IMR-90 (cell line): ENCODE measurements at regions of chr2 and their contacts with region 1.

Region 1: GRCh38 chr2:128321784-128322714 is 3.4 kb upstream of the HS6ST1 start:
- DNase-seq: peak; percentile 75
- ATAC-seq: peak; percentile 64
- H3K4me3 ChIP-seq: peak overlapping the region; percentile 49
- H3K27ac ChIP-seq: peak overlapping the region; percentile 58
- H3K4me1 ChIP-seq: peaks cover 7% of the 10 kb centered on the region; the same call in 1 of the 2 replicates
- H3K27me3 ChIP-seq: no peaks in the 10 kb centered on the region
- CTCF ChIP-seq: peak; percentile 99
- POLR2A ChIP-seq: peak; percentile 63
- RAD21 ChIP-seq: peak; percentile 95

Region 2: DNA sequence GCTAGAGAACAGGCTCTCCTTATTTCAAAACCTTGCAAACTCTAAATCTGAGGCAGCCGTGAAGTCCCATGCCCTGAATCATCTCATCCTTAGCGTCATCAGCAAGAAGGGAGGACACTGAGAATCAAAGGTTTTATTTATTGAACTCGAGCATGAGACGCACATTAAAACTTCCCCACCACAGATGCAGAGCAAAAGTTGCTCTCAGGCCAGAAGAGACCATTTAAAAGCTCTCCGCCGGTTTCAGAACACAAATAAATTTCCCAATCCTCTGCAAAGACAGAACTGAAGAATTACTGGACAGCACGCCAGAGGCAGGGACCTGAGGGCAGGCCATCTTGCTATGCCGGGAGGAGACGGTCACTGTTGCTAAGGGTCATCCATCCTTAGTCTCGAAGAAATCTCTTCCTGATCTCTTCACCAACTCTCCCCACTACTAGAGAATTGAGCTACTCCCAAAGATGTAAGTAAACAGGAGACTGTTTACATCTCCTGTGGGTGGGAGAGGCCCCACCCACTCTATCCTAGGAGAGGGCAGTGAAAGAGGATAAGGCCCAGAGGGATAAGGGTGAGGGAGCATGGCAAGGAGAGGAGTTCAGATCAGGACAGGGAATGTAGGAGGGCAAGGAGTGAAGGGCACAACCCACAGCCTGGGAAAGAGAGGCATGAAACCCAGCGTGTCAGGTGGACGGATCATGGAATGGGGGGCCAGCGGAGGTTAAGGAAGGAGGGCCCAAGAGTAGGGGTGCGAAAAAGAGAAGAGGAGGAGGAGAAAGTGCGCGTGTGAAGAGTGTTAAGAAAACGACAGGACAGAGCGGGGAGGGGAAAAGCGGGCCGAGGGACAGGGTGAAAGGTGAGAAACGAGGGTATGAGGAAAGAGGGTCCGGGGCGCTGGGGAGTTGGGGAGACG is 437.4 kb before region 1 on chr2:
- CTCF ChIA-PET with region 1: no interaction called
- POLR2A ChIA-PET with region 1: no interaction called
- dilution Hi-C with region 1: no loop called
- in situ Hi-C with region 1: loop called (anchors 25 kb)
- intact Hi-C with region 1: no loop called
- DNase-seq: peak; percentile 89
- ATAC-seq: peak; percentile 9; the same call in 1 of the 2 replicates
- H3K4me3 ChIP-seq: peak overlapping the region; percentile 53
- H3K27ac ChIP-seq: peak overlapping the region; percentile 91
- H3K4me1 ChIP-seq: peaks cover 8% of the 10 kb centered on the region
- H3K27me3 ChIP-seq: no peaks in the 10 kb centered on the region
- CTCF ChIP-seq: no peak
- POLR2A ChIP-seq: peak; percentile 94
- RAD21 ChIP-seq: no peak

Region 3: GRCh38 chr2:128531856-128532255 is 209.8 kb after region 1 on chr2:
- CTCF ChIA-PET with region 1: no interaction called
- POLR2A ChIA-PET with region 1: no interaction called
- dilution Hi-C with region 1: no loop called
- in situ Hi-C with region 1: loop called (anchors 10 kb)
- intact Hi-C with region 1: loop called (anchors 1 kb)
- DNase-seq: no peak
- ATAC-seq: no peak
- H3K4me3 ChIP-seq: no peak overlapping the region
- H3K27ac ChIP-seq: no peak overlapping the region
- H3K4me1 ChIP-seq: peaks cover under 1% of the 10 kb centered on the region; the same call in 1 of the 2 replicates
- H3K27me3 ChIP-seq: no peaks in the 10 kb centered on the region; the same call in 1 of the 2 replicates
- CTCF ChIP-seq: 0 out of 2 replicates have a peak, but pooled peaks have one; percentile 17
- POLR2A ChIP-seq: no peak
- RAD21 ChIP-seq: 0 out of 2 replicates have a peak, but pooled peaks have one; percentile 2

Region 4: DNA sequence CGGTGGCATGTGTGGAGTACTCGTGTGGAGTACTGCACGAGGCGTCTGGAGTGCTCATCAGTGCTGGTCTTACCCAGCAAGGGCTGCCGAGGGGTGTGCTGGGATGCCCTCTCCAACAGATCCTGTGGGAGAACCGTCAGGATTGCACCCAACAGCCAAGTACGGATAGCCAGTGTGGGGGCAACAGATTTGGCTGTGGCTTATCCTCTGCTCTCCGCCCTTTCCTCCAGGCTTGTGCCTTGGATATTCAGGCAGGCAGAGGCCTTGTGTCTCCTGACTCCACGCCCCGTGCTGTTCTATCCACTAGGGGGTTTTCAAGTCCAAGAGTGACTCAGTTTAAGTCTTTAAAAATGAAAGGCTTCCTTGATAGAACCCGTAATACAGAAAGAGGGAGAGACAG is 317.6 kb after region 1 on chr2:
- CTCF ChIA-PET with region 1: no interaction called
- POLR2A ChIA-PET with region 1: no interaction called
- dilution Hi-C with region 1: no loop called
- in situ Hi-C with region 1: no loop called
- intact Hi-C with region 1: loop called (anchors 1 kb)
- DNase-seq: no peak
- ATAC-seq: no peak
- H3K4me3 ChIP-seq: no peak overlapping the region
- H3K27ac ChIP-seq: no peak overlapping the region
- H3K4me1 ChIP-seq: no peaks in the 10 kb centered on the region; the same call in 1 of the 2 replicates
- H3K27me3 ChIP-seq: peaks cover 15% of the 10 kb centered on the region
- CTCF ChIP-seq: no peak
- POLR2A ChIP-seq: no peak
- RAD21 ChIP-seq: no peak

Region 5: DNA sequence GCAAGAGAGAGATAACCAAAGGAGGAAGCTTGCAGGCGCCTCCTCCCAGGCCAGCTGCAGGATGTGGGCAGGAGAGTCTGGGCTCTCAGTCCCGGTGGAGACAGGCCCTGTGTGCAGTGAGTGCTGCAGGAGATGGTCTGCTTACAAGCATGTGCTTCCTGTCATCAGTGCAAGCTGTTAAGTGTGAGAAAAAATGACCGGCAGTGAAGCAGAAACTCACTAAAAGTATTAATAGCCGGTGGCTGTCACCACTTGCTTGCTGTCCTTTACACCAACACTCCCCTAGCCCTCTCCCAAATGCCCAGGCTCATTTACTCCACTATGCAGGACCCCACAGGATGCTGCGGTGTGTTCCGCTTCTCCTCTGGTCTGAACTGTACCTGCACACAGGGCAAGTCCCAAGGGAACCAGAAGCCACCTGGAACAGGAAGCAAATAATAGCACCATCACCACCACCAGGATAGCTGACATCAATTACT is 432.2 kb after region 1 on chr2:
- CTCF ChIA-PET with region 1: interaction called, 3 read pairs
- POLR2A ChIA-PET with region 1: no interaction called
- dilution Hi-C with region 1: no loop called
- in situ Hi-C with region 1: loop called (anchors 10 kb)
- intact Hi-C with region 1: loop called (anchors 1 kb)
- DNase-seq: no peak
- ATAC-seq: no peak
- H3K4me3 ChIP-seq: no peak overlapping the region
- H3K27ac ChIP-seq: no peak overlapping the region
- H3K4me1 ChIP-seq: no peaks in the 10 kb centered on the region
- H3K27me3 ChIP-seq: peaks cover 15% of the 10 kb centered on the region
- CTCF ChIP-seq: no peak
- POLR2A ChIP-seq: no peak
- RAD21 ChIP-seq: no peak

Region 6: GRCh38 chr2:129923265-129924091 is 1601.4 kb after region 1 on chr2:
- CTCF ChIA-PET with region 1: no interaction called
- POLR2A ChIA-PET with region 1: no interaction called
- dilution Hi-C with region 1: no loop called
- in situ Hi-C with region 1: no loop called
- intact Hi-C with region 1: loop called (anchors 5 kb)
- DNase-seq: peak; percentile 37
- ATAC-seq: peak; percentile 80
- H3K4me3 ChIP-seq: no peak overlapping the region
- H3K27ac ChIP-seq: no peak overlapping the region
- H3K4me1 ChIP-seq: no peaks in the 10 kb centered on the region
- H3K27me3 ChIP-seq: no peaks in the 10 kb centered on the region; the same call in 1 of the 2 replicates
- CTCF ChIP-seq: peak; percentile 52
- POLR2A ChIP-seq: no peak
- RAD21 ChIP-seq: peak; percentile 59